Activated naive CD8-positive, alpha-beta T cell treated with anti-CD3 and anti-CD28 coated beads, Interleukin-2, amount 10 ng/mL, durations not matched to agents 7 days and 5 days (primary cell): ENCODE measurements at regions of chr2 and their contacts with region 1.

Region 1: DNA sequence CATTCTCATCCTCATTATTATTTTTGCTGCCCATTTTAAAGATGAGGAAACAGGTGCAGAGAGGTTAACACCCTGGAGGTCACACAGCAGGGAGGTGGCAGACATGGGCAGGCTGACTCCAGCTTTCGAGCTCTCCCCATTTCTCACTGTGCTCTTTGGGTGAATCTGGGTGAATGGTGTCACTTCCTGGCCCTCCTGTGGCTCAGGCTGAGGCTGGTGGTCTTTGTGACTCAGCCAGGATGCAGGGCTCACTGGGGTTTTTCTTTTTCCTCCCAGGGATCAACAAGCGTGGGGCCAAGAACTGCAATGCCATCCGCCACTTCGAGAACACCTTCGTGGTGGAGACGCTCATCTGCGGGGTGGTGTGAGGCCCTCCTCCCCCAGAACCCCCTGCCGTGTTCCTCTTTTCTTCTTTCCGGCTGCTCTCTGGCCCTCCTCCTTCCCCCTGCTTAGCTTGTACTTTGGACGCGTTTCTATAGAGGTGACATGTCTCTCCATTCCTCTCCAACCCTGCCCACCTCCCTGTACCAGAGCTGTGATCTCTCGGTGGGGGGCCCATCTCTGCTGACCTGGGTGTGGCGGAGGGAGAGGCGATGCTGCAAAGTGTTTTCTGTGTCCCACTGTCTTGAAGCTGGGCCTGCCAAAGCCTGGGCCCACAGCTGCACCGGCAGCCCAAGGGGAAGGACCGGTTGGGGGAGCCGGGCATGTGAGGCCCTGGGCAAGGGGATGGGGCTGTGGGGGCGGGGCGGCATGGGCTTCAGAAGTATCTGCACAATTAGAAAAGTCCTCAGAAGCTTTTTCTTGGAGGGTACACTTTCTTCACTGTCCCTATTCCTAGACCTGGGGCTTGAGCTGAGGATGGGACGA is 13.2 kb downstream of the ITM2C start:
- DNase-seq: peak; percentile 76
- ATAC-seq: peak; percentile 87
- H3K4me3 Mint-ChIP-seq: peak overlapping the region; percentile 71
- H3K27ac Mint-ChIP-seq: peak overlapping the region; percentile 91
- H3K4me1 Mint-ChIP-seq: peaks cover 34% of the 10 kb centered on the region
- H3K27me3 Mint-ChIP-seq: no peaks in the 10 kb centered on the region

Region 2: DNA sequence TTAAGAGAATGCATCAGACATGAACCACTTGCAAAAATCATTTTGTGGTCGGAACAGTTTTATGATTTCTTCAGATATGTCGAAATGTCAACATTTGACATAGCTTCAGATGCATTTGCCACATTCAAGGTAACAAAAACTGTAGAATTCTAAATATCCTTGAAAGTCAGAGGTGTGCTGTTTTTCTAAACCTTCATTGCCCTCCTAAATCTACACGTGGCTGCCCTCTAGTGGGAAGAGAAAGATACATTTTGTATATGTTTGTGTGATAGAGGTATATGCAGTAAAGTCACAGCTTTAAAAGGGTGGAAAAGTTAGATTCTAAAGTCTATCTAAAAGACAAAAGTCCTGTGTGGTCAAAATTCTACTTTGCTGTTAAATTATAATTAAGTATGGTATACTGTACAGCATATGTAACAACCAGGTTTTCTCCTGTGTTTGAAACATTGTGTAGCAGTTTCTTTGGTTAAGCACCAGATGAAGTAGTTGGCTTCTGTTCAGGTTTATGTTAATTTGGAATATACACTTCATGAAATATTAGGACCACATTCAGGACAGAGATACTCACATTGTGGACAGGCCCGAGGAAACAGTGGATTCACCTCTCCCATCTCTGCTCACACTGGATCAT is 79.1 kb before region 1 on chr2:
- POLR2A ChIA-PET with region 1: no interaction called
- DNase-seq: no peak
- ATAC-seq: no peak
- H3K4me3 Mint-ChIP-seq: peak overlapping the region; percentile 21
- H3K27ac Mint-ChIP-seq: peak overlapping the region; percentile 57
- H3K4me1 Mint-ChIP-seq: peaks cover 24% of the 10 kb centered on the region
- H3K27me3 Mint-ChIP-seq: no peaks in the 10 kb centered on the region

Region 3: GRCh38 chr2:230847883-230848388 is 30.0 kb before region 1 on chr2:
- POLR2A ChIA-PET with region 1: no interaction called
- DNase-seq: peak; percentile 91
- ATAC-seq: peak; percentile 94
- H3K4me3 Mint-ChIP-seq: no peak overlapping the region
- H3K27ac Mint-ChIP-seq: no peak overlapping the region
- H3K4me1 Mint-ChIP-seq: peaks cover 2% of the 10 kb centered on the region
- H3K27me3 Mint-ChIP-seq: peaks cover 21% of the 10 kb centered on the region

Region 4: DNA sequence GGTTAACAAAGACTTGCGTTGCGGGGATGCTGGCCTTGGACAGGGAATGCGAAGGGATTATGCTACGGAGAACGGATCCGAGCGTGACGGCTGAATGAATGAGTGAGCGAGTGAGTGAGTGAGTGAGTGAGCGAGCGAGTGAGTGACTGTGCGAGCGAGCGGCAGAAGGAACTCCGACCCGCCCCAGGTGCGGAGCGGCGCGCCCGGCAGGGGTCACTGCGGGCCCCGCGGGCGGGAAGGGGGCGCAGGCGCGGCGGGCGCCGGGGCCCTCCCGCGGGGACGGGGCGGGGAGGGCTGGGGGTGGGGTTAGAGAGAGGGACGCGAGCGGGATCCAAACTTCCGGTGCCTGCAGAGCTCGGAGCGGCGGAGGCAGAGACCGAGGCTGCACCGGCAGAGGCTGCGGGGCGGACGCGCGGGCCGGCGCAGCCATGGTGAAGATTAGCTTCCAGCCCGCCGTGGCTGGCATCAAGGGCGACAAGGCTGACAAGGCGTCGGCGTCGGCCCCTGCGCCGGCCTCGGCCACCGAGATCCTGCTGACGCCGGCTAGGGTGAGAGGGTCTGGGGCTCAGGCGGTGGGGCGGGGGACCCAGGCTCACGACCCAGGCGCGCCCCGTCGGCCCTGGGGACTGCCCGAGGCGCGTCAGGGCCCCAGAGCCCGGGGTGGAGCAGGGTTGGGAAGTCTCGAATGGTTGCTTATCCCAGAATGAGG is 13.2 kb before region 1 on chr2 and contains the start of gene ITM2C:
- POLR2A ChIA-PET with region 1: interaction called, 53 read pairs
- DNase-seq: peak; percentile 86
- ATAC-seq: peak; percentile 80
- H3K4me3 Mint-ChIP-seq: peak within 1 kb of the TSS; percentile 90
- H3K27ac Mint-ChIP-seq: peak within 1 kb of the TSS; percentile 84
- H3K4me1 Mint-ChIP-seq: peaks cover 44% of the 10 kb centered on the region
- H3K27me3 Mint-ChIP-seq: peaks cover 6% of the 10 kb centered on the region
- total RNA-seq, gene ITM2C: 102 to 105 TPM

Region 5: DNA sequence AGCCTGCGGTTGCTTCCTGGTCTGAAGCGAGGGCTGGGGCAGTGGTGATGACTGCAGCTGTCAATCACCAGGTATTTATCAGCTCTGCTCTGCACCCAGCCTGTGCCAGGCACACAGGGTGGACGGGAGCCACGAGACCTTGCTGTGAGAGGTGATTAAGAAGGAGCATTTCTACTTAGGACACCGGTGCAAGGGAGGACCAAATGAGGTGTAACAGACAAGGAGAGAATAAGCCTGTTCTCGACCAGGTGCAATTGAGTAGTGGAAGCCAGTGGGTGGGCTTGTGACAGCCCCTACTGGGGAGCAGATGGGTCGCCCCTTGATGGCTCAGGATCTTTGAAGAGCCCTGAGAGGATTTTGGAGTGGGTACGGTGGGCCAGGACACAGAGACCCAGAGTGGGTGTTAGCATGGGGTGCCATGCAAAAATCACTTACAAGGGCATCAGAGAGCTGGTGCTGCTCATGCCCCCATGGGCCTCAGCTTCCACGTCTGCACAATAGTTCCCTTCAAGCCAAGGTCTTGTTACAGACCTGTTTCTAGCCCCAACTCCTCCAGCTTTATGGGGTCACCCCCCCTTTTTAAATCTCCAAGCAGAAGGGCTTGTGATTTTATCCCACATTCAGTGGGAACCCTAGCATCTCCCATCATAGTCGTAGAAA is 22.5 kb after region 1 on chr2:
- POLR2A ChIA-PET with region 1: no interaction called
- DNase-seq: no peak
- ATAC-seq: no peak
- H3K4me3 Mint-ChIP-seq: no peak overlapping the region
- H3K27ac Mint-ChIP-seq: no peak overlapping the region
- H3K4me1 Mint-ChIP-seq: peaks cover 19% of the 10 kb centered on the region
- H3K27me3 Mint-ChIP-seq: peaks cover 2% of the 10 kb centered on the region

Region 6: DNA sequence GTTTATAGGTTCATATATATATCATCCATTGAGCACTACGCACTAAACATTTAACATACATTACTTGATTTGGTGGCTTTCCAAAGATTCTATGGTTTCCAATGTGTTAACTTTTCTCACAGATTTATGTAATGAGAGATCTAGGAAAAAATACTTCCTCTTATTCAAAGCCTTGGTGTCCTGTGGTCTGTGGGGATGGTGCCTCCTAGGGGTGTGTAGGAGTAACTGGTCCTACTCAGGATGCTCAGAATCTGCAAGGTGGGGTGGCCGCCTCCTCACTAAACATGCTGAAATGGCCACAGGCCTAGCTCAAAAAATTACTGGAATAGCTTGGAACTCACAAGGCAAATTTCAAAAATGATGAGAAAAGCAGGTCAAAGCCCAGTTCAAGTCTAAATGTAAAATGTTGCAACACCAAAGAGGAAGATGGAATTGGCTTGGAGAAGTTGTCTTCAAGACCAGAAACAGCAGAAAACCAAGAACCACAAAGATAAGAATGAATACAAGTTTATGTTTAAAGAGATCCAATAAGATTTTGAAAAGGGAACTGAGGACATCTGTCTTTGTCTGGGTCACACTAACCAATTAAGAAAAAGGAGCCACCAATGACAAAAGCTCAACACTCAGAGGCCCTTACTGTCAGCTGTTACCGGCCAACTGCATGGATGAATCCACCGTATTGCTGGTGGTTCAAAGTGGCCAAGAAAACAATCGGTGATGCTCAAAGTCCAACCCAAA is 35.6 kb after region 1 on chr2:
- POLR2A ChIA-PET with region 1: no interaction called
- DNase-seq: peak; percentile 25
- ATAC-seq: peak; percentile 57
- H3K4me3 Mint-ChIP-seq: no peak overlapping the region
- H3K27ac Mint-ChIP-seq: no peak overlapping the region
- H3K4me1 Mint-ChIP-seq: peaks cover 27% of the 10 kb centered on the region
- H3K27me3 Mint-ChIP-seq: no peaks in the 10 kb centered on the region